ENCODE measurements at regions of chr11 and their contacts with region 1.

Region 1: GRCh38 chr11:14519917-14520746 is at the start of gene PSMA1:
- DNase-seq: peak; percentile 97
- ATAC-seq: peak; percentile 99
- total RNA-seq, gene PSMA1: 117 TPM

Region 2: GRCh38 chr11:14499554-14500180 is 20.5 kb before region 1 on chr11 and contains the start of gene COPB1:
- intact Hi-C with region 1: loop called (anchors 1 kb)
- DNase-seq: peak; percentile 97
- ATAC-seq: peak; percentile 99
- total RNA-seq, gene COPB1: 42.1 TPM

Region 3: GRCh38 chr11:14892036-14892567 is 372.0 kb after region 1 on chr11 and contains the start of gene CYP2R1:
- intact Hi-C with region 1: loop called (anchors 5 kb)
- DNase-seq: peak; percentile 97
- ATAC-seq: peak; percentile 99
- total RNA-seq, gene CYP2R1: 7.0 TPM